Colonic mucosa (tissue), 4 donors: ENCODE measurements at regions of chr16 and their contacts with region 1.

Region 1: GRCh38 chr16:66608241-66609138 is 4.0 kb downstream of the CMTM3 start:
- DNase-seq: peak; percentile 87
- H3K4me3 ChIP-seq: no peak overlapping the region
- H3K27ac ChIP-seq: no peak overlapping the region
- H3K4me1 ChIP-seq: no peaks in the 10 kb centered on the region
- H3K27me3 ChIP-seq: peaks cover 20% of the 10 kb centered on the region
- CTCF ChIP-seq: peak; percentile 84

Region 2: GRCh38 chr16:66406534-66407221 is 201.8 kb before region 1 on chr16:
- intact Hi-C with region 1: loop called (anchors 5 kb)
- DNase-seq: peak; percentile 91
- H3K4me3 ChIP-seq: peak overlapping the region; percentile 62
- H3K27ac ChIP-seq: no peak overlapping the region
- H3K4me1 ChIP-seq: peaks cover 5% of the 10 kb centered on the region
- H3K27me3 ChIP-seq: no peaks in the 10 kb centered on the region
- CTCF ChIP-seq: peak; percentile 84

Region 3: DNA sequence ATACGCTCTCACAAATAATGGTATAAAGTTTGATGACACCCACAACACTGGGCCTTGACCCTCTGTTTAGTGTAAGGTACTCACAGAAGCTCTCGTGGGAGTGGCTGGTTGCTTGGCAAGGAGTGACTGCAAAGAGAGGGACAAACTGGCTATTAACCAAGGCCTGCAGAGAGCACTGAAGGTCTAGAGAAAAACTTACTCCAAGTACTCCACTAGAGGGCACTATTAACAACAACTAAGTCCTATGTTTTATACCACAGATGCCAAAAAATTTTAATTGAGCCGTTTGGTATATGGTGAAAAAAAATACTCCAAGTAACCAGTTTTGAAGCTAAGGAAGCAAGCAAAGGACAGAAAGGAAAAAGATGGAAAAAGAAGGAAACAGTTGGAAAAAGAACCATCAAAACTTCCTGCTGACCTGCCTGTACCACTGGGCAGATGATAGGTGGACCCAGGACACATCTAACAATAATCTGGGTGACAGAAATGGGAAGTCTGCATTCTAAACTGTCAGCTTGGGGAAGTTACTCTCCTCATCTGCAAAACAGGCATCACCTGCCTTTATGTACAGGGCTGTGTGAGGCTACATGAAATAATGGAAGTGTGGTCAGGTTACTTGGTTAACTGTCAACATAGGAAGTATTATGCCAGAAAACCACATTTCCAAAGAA is 119.8 kb after region 1 on chr16:
- intact Hi-C with region 1: loop called (anchors 5 kb)
- DNase-seq: no peak
- H3K4me3 ChIP-seq: no peak overlapping the region
- H3K27ac ChIP-seq: no peak overlapping the region
- H3K4me1 ChIP-seq: no peaks in the 10 kb centered on the region
- H3K27me3 ChIP-seq: no peaks in the 10 kb centered on the region
- CTCF ChIP-seq: peak; percentile 58

Region 4: GRCh38 chr16:66869424-66869823 is 260.9 kb after region 1 on chr16:
- intact Hi-C with region 1: loop called (anchors 5 kb)
- DNase-seq: no peak
- H3K4me3 ChIP-seq: no peak overlapping the region
- H3K27ac ChIP-seq: no peak overlapping the region
- H3K4me1 ChIP-seq: peaks cover 5% of the 10 kb centered on the region
- H3K27me3 ChIP-seq: no peaks in the 10 kb centered on the region
- CTCF ChIP-seq: no peak